ENCODE measurements at regions of chr6 and their contacts with region 1.

Region 1: GRCh38 chr6:36885461-36886401 is at the start of gene C6orf89:
- DNase-seq: peak; percentile 99
- ATAC-seq: peak; percentile 99
- H3K4me3 Mint-ChIP-seq: peak within 1 kb of the TSS; percentile 92
- H3K27ac Mint-ChIP-seq: peak within 1 kb of the TSS; percentile 91
- H3K4me1 Mint-ChIP-seq: peaks cover 40% of the 10 kb centered on the region
- H3K27me3 Mint-ChIP-seq: no peaks in the 10 kb centered on the region
- total RNA-seq, gene C6orf89: 46.4 to 47.7 TPM

Region 2: DNA sequence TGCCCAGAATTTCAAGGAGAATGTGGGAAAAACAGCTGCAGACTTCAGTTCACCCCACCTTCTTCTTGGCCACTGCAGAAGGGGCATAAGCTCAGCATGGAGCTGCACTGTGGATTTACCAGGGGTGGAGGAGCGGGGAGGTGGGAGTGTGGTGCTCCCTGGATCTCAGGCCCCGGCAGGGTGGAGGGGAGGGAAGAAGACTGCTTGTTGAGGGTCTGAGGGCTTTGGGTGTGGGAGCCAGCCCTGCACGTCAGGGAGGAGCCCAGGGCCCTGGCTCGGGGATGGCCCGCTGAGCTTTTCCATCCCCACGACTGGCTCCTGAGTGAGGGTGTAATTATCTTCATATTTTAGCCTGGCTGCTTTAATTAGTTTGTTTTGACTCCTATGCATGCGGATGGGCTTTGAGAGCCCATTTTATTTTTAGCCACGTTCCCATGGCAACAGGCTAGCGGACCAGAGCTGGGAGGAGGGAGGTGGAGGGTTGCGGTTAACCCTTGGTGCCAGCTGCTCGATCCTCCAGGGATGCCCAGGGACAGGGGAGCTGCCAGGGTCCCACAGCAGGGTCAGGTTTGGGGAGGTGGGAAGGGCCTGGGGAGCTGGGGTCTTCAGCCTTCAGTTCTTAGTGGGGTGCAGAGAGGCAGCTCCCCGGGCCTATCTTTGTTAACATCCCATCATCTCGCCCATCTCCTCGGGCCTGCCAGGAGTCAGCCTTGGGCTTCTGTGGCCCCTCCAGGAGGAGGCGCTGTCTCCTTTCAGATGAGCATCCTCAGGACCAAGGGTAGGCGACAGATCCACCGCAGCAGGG is 119.9 kb before region 1 on chr6:
- CTCF ChIA-PET with region 1: interaction called, 16 read pairs
- DNase-seq: peak; percentile 90
- ATAC-seq: peak; percentile 93
- H3K4me3 Mint-ChIP-seq: no peak overlapping the region
- H3K27ac Mint-ChIP-seq: no peak overlapping the region
- H3K4me1 Mint-ChIP-seq: peaks cover 37% of the 10 kb centered on the region
- H3K27me3 Mint-ChIP-seq: no peaks in the 10 kb centered on the region

Region 3: DNA sequence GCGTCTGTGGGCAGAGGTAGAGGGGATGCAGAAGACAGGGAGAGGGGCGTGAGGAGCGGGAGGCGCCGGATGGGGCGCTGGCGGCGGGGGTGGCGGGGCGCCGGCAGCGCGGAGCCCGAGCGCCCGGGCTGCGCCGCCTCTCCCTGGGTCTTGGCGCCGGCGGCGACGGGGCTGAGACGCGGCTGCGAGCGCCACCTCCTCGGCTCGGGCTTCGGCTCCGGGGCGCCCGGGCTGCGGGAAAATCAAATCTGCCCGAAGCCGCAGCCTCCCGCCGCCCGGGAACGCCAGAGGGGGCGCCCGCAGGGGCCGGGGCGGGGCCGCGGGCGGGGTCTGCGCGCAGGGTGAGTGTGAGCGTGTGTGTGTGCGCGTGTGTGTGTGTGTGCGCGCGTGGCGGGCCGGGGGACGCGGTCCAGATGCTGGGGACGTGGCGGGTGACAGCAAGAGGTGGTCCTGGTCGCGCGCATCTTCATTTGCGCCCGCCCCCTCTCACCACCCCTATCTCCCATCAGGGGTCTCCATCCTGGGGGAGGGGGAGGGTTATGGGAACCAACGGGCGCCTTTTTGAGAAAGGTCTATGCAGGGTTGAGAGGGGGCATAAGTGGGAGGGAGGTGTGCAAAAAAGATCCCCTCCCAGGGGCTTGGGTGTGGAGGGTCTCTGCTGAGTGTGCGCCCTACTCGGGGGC is 45.8 kb before region 1 on chr6:
- CTCF ChIA-PET with region 1: no interaction called
- DNase-seq: no peak
- ATAC-seq: peak; percentile 74
- H3K4me3 Mint-ChIP-seq: peak overlapping the region; percentile 64
- H3K27ac Mint-ChIP-seq: no peak overlapping the region
- H3K4me1 Mint-ChIP-seq: peaks cover 15% of the 10 kb centered on the region
- H3K27me3 Mint-ChIP-seq: peaks cover 51% of the 10 kb centered on the region

Region 4: GRCh38 chr6:36874443-36875249 is 11.1 kb before region 1 on chr6 and contains the start of gene PPIL1:
- CTCF ChIA-PET with region 1: interaction called, 103 read pairs
- DNase-seq: peak; percentile 89
- ATAC-seq: peak; percentile 90
- H3K4me3 Mint-ChIP-seq: peak within 1 kb of the TSS; percentile 99
- H3K27ac Mint-ChIP-seq: peak within 1 kb of the TSS; percentile 100
- H3K4me1 Mint-ChIP-seq: peaks cover 53% of the 10 kb centered on the region
- H3K27me3 Mint-ChIP-seq: peaks cover 2% of the 10 kb centered on the region
- total RNA-seq, gene PPIL1: 30.8 to 39.9 TPM

Region 5: GRCh38 chr6:36912586-36912985 is 26.9 kb after region 1 on chr6:
- CTCF ChIA-PET with region 1: interaction called, 23 read pairs
- DNase-seq: peak; percentile 88
- ATAC-seq: peak; percentile 89
- H3K4me3 Mint-ChIP-seq: peak overlapping the region; percentile 66
- H3K27ac Mint-ChIP-seq: peak overlapping the region; percentile 89
- H3K4me1 Mint-ChIP-seq: peaks cover 61% of the 10 kb centered on the region
- H3K27me3 Mint-ChIP-seq: no peaks in the 10 kb centered on the region

Region 6: GRCh38 chr6:36955671-36956445 is 70.1 kb after region 1 on chr6:
- CTCF ChIA-PET with region 1: interaction called, 12 read pairs
- DNase-seq: no peak
- ATAC-seq: peak; percentile 25
- H3K4me3 Mint-ChIP-seq: no peak overlapping the region
- H3K27ac Mint-ChIP-seq: no peak overlapping the region
- H3K4me1 Mint-ChIP-seq: peaks cover 47% of the 10 kb centered on the region
- H3K27me3 Mint-ChIP-seq: peaks cover 2% of the 10 kb centered on the region

Region 7: DNA sequence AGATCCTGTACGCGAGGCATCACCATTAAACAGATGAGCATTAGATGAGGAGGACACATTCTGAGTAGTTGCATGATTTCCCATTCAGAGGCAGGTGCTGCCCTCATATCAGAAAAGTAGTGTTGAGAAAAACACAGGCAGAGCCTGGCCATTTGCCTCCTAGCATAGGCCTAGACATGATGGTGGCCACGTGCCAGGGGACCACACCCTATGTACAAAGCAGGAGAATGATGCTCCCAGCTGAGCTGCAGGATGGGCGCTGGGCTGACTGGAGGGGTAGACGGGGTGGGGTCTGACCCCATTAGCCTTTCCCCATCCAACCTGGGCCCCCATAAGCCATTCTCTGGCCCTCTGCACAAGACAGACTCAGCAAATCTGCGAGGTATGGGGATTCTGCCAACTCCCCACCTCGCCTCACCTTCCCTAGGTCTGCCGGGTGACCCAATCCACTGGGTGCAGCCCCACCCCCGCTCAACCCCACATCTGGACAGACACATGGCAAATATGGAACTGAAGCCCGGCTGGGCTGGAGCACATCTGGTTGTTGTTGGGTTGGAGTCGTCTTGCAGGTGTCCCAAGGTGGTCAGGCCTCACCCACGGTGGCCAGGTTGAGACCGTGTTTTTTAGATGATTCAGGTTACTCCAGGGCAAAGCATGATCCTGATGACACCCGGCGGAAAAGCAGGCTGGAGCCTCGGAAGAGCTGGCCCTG is 82.7 kb after region 1 on chr6:
- CTCF ChIA-PET with region 1: no interaction called
- DNase-seq: no peak
- ATAC-seq: no peak
- H3K4me3 Mint-ChIP-seq: no peak overlapping the region
- H3K27ac Mint-ChIP-seq: no peak overlapping the region
- H3K4me1 Mint-ChIP-seq: peaks cover 15% of the 10 kb centered on the region
- H3K27me3 Mint-ChIP-seq: no peaks in the 10 kb centered on the region

Region 8: DNA sequence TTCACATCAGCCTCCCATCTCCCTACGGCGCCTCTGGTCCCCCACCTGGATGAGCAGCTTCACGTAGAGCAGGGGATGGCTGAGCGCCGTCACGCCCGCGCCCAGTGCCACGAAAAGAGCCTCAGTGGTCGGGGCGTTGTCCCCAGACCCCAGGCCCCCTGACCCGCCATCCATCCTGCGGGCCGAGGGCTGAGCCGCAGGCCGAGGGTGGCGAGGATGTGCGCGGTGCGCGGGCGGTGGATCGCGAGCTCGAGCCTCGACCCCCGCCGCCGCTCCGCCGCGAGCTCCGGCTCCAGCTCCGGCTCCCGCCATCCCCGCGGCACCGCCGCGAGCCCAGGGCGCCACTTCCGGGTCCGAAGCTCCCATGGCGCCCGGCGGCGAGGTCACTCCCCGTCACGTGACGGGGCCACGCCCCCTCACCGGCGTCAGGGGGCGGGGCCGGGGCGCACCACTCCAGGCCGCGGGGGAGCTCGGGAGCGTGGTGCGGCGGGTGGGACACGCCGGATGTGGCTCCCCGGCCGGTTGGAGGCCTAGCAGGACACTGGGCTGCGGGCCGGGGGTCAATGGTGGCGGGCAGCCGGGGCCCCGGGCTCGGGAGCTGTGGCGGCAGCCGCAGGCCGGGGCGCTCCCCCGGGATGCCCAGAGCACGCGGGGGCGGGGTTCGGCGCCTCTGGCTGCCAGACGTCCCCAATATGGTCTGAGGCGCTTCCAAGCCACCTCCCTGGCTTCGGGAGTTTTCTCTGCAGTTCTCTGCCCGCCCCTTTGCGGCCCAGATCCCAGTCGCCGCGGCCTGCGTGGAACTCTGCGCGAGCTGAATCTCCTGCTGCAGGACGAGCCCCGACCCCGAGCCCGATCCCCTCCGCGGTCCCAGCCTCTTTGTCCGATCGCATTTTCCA is 100.3 kb after region 1 on chr6 and contains the start of gene MTCH1:
- CTCF ChIA-PET with region 1: interaction called, 10 read pairs
- DNase-seq: peak; percentile 89
- ATAC-seq: peak; percentile 90
- H3K4me3 Mint-ChIP-seq: no peak within 1 kb of the TSS
- H3K27ac Mint-ChIP-seq: peak within 1 kb of the TSS; percentile 86
- H3K4me1 Mint-ChIP-seq: peaks cover 20% of the 10 kb centered on the region
- H3K27me3 Mint-ChIP-seq: peaks cover 15% of the 10 kb centered on the region
- total RNA-seq, gene MTCH1: 125 to 167 TPM

Region 9: DNA sequence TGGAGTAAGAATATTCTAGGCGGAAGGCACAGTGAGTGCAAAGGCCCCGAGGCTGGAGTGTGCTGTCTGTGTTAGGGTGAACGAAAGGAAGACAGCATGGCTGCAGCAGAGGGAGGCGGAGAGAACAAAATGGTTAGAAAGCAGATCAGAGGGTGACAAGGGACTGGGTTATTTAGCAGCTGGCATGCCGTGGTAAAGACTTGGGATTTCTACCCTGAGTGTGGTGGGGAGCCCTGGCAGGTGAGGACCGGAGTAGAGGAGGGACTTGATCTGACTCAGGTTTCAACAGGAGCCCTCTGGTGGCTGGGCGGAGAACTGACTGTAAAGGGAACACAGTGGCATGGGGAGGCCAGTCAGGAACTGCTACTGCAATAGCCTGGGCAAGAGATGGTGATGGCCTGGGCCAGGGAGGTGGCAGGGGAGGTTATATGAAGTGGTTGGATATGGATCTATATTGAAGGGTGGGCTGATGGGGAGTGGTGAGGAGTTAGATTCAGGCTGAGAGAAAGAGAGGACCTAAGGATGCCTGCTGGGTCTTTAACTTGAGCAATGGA is 322.2 kb after region 1 on chr6:
- CTCF ChIA-PET with region 1: interaction called, 10 read pairs
- DNase-seq: peak; percentile 97
- ATAC-seq: peak; percentile 85
- H3K4me3 Mint-ChIP-seq: peak overlapping the region; percentile 3
- H3K27ac Mint-ChIP-seq: peak overlapping the region; percentile 88
- H3K4me1 Mint-ChIP-seq: peaks cover 65% of the 10 kb centered on the region
- H3K27me3 Mint-ChIP-seq: no peaks in the 10 kb centered on the region

Measured in activated CD8-positive, alpha-beta memory T cell treated with anti-CD3 and anti-CD28 coated beads, Interleukin-2, amount 10 ng/mL, durations not matched to agents 7 days and 5 days (primary cell).